ENCODE measurements at regions of chr11 and their contacts with region 1.

Region 1: GRCh38 chr11:62689421-62690183 is at the start of gene LRRN4CL:
- DNase-seq: peak; percentile 72
- H3K4me3 ChIP-seq: no peak within 1 kb of the TSS
- H3K27ac ChIP-seq: peak within 1 kb of the TSS; percentile 63
- H3K4me1 ChIP-seq: peaks cover 12% of the 10 kb centered on the region
- H3K27me3 ChIP-seq: no peaks in the 10 kb centered on the region
- CTCF ChIP-seq: no peak
- total RNA-seq, gene LRRN4CL: 0.37 and 0.52 TPM in 2 replicates

Region 2: DNA sequence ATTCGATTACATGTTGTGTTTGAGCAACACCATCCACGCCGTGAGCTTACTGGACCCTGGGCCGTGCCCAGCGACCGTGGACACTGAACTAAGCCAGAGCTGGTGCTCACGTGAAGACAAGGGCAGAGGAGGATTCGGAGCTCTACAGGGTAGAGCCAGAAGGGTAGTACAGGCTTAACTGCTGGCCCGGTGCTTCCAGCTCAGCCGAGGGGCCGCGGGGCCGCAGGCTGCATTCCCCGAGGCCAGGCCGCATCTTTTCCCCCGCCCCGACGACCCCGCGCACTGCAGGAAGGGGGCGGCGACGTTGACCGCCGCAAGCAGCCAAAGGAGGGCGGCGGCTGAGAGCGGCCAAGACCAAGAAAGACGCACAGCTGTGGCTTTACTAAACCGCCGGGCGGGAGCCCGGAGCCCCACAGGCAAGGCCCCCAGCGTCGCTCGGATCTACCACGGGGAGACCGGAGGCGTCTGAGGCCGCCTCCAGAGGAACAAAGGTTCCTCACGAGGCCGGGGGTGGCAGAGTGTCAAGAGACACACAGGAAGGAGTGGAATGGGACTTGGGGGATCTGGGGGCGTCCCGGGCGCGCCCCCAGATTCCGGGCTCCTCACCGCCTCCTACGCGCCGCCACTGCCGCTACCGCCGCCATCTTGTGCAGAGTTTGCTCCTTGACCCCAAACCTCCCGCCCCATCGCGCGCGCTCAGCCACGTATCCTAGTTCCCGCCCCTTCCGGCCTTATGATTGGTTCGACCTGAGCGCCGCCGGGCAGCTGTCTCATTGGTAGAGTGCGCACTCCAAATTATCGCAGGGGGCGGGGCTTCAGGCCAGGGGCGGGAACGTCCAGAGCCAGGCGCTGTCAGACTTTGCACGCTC is 43.4 kb before region 1 on chr11 and contains the start of gene GANAB:
- CTCF ChIA-PET with region 1: no interaction called
- POLR2A ChIA-PET with region 1: interaction called, 13 read pairs
- intact Hi-C with region 1: no loop called
- DNase-seq: peak; percentile 100
- H3K4me3 ChIP-seq: peak within 1 kb of the TSS; percentile 96
- H3K27ac ChIP-seq: peak within 1 kb of the TSS; percentile 97
- H3K4me1 ChIP-seq: peaks cover 8% of the 10 kb centered on the region
- H3K27me3 ChIP-seq: no peaks in the 10 kb centered on the region
- CTCF ChIP-seq: no peak
- total RNA-seq, gene GANAB: 475 and 489 TPM in 2 replicates

Region 3: DNA sequence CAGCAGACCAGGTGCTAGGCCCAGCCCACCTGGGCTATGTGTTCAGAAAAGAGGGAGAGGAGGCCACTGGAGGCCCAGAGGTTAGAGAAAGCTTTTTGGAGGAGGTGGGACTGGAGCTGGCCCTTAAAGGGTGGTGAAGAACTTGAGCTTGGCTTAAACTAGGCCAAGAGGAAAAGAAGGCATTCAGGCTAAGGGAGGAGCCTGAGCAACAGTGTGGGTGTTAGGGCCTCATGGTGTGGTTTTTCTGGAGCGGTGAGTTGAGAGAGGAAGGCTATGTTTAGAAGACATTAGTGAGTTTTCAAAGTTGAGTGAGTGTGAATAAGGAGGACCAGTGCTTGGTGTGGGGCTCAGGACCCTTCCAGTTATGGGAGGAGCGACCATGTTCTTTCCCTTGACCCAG is 87.8 kb after region 1 on chr11:
- CTCF ChIA-PET with region 1: no interaction called
- POLR2A ChIA-PET with region 1: no interaction called
- intact Hi-C with region 1: no loop called
- DNase-seq: no peak
- H3K4me3 ChIP-seq: no peak overlapping the region
- H3K27ac ChIP-seq: peak overlapping the region; percentile 16
- H3K4me1 ChIP-seq: peaks cover under 1% of the 10 kb centered on the region
- H3K27me3 ChIP-seq: no peaks in the 10 kb centered on the region
- CTCF ChIP-seq: no peak

Measured in A673 (cell line).